ENCODE measurements at regions of chr4 and their contacts with region 1.

Region 1: GRCh38 chr4:173420324-173420752 is 21.4 kb upstream of the SCRG1 start:
- DNase-seq: no peak
- H3K4me3 ChIP-seq: no peak overlapping the region
- H3K27ac ChIP-seq: no peak overlapping the region
- H3K4me1 ChIP-seq: peaks cover 4% of the 10 kb centered on the region
- H3K27me3 ChIP-seq: no peaks in the 10 kb centered on the region
- CTCF ChIP-seq: peak; percentile 37 to 43

Region 2: DNA sequence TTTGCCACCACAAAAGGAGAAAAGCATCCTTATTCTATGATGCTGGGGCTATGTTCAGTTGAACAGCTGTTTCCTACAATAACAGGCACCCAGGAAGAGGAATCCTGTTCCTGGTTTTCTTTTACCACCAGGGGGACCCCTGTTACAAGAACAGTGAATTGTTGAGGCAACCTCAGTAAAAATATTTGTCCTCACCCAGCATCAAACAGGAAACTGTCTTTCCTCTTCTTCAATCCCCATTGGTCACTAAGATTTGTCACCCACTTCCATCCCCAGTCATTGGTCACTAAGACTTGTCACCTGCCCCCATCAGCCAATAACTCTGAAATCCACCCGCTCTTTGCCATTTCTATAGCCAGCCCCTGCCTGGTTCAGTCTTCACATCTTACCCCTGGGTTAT is 395.2 kb before region 1 on chr4:
- CTCF ChIA-PET with region 1: no interaction called
- dilution Hi-C with region 1: no loop called
- in situ Hi-C with region 1: loop called in 1 of 2 experiments (anchors 25 kb)
- intact Hi-C with region 1: loop called (anchors 5 kb)
- DNase-seq: peak; percentile 58
- H3K4me3 ChIP-seq: no peak overlapping the region
- H3K27ac ChIP-seq: no peak overlapping the region
- H3K4me1 ChIP-seq: no peaks in the 10 kb centered on the region
- H3K27me3 ChIP-seq: no peaks in the 10 kb centered on the region
- CTCF ChIP-seq: peak; percentile 62 to 79

Region 3: GRCh38 chr4:173288296-173288695 is 132.0 kb before region 1 on chr4:
- CTCF ChIA-PET with region 1: no interaction called
- dilution Hi-C with region 1: no loop called
- in situ Hi-C with region 1: no loop called
- intact Hi-C with region 1: loop called (anchors 1 kb)
- DNase-seq: peak; percentile 52
- H3K4me3 ChIP-seq: no peak overlapping the region
- H3K27ac ChIP-seq: no peak overlapping the region
- H3K4me1 ChIP-seq: peaks cover 9% of the 10 kb centered on the region
- H3K27me3 ChIP-seq: no peaks in the 10 kb centered on the region
- CTCF ChIP-seq: peak; percentile 54 to 67

Region 4: GRCh38 chr4:173334085-173334772 is 86.1 kb before region 1 on chr4 and contains the start of gene HMGB2:
- CTCF ChIA-PET with region 1: no interaction called
- dilution Hi-C with region 1: no loop called
- in situ Hi-C with region 1: loop called in 1 of 2 experiments (anchors 10 kb)
- intact Hi-C with region 1: loop called (anchors 1 kb)
- DNase-seq: peak; percentile 100
- H3K4me3 ChIP-seq: peak within 1 kb of the TSS; percentile 98 to 99 (median 98)
- H3K27ac ChIP-seq: peak within 1 kb of the TSS; percentile 98
- H3K4me1 ChIP-seq: peaks cover 9% of the 10 kb centered on the region
- H3K27me3 ChIP-seq: no peaks in the 10 kb centered on the region
- CTCF ChIP-seq: no peak
- total RNA-seq, gene HMGB2: 9.8 to 73.9 TPM

Region 5: GRCh38 chr4:173494013-173494970 is 74.0 kb after region 1 on chr4:
- CTCF ChIA-PET with region 1: interaction called, 7 read pairs
- dilution Hi-C with region 1: no loop called
- in situ Hi-C with region 1: loop called in 1 of 2 experiments (anchors 10 kb)
- intact Hi-C with region 1: loop called (anchors 1 kb)
- DNase-seq: peak; percentile 66
- H3K4me3 ChIP-seq: peak overlapping the region; percentile 18 to 43 (median 42)
- H3K27ac ChIP-seq: no peak overlapping the region
- H3K4me1 ChIP-seq: no peaks in the 10 kb centered on the region
- H3K27me3 ChIP-seq: no peaks in the 10 kb centered on the region
- CTCF ChIP-seq: peak; percentile 78 to 88

Region 6: DNA sequence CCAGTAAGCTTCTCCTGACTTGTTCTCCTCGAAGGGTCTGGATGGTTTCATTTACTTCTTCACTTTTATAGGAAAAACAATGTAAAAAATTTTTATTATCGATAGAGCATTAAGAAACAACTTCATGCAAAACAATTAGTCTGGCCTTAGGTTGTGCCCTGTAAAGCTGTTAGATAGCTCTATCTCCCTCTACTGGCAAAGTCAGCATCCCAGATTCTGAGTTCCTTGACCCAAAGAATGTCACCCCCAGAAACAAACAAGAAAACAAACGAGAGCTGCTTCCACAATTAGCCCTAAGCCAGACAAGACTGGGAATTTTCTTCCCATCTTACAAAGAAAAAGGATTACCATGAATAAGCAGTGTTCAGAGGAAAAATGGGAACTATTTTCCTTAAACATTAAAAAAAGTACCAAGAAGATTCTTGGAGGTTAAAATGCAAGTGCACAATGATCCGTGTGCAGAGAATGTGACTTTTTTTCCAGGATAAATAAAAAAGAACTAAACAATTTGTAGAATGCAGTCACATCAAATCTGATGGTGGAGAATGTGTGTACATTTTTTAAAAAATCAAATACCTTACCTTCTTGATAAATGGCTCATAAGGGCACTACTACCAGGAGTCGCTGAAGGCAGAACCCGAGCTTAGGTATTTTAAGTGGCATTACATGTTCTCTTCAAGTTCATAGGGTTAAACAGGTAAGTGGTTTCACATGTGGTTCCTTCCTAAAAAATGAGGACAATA is 570.0 kb after region 1 on chr4:
- CTCF ChIA-PET with region 1: no interaction called
- dilution Hi-C with region 1: no loop called
- in situ Hi-C with region 1: no loop called
- intact Hi-C with region 1: loop called (anchors 5 kb)
- DNase-seq: peak; percentile 8
- H3K4me3 ChIP-seq: no peak overlapping the region
- H3K27ac ChIP-seq: no peak overlapping the region
- H3K4me1 ChIP-seq: no peaks in the 10 kb centered on the region
- H3K27me3 ChIP-seq: no peaks in the 10 kb centered on the region
- CTCF ChIP-seq: peak; percentile 51 to 62